Esophagus muscularis mucosa (tissue), 4 donors: ENCODE measurements at regions of chr4 and their contacts with region 1.

Region 1: GRCh38 chr4:14853176-14853943 is 148.9 kb upstream of the CPEB2 start:
- DNase-seq: no peak
- H3K4me3 ChIP-seq: no peak overlapping the region
- H3K27ac ChIP-seq: peak overlapping the region; percentile 39 to 61 (median 50)
- H3K4me1 ChIP-seq: peaks cover 0 to 34% (median 30%) of the 10 kb centered on the region in 4 donors
- H3K27me3 ChIP-seq: no peaks in the 10 kb centered on the region
- CTCF ChIP-seq: no peak
- EP300 ChIP-seq: no peak
- POLR2A ChIP-seq: no peak

Region 2: DNA sequence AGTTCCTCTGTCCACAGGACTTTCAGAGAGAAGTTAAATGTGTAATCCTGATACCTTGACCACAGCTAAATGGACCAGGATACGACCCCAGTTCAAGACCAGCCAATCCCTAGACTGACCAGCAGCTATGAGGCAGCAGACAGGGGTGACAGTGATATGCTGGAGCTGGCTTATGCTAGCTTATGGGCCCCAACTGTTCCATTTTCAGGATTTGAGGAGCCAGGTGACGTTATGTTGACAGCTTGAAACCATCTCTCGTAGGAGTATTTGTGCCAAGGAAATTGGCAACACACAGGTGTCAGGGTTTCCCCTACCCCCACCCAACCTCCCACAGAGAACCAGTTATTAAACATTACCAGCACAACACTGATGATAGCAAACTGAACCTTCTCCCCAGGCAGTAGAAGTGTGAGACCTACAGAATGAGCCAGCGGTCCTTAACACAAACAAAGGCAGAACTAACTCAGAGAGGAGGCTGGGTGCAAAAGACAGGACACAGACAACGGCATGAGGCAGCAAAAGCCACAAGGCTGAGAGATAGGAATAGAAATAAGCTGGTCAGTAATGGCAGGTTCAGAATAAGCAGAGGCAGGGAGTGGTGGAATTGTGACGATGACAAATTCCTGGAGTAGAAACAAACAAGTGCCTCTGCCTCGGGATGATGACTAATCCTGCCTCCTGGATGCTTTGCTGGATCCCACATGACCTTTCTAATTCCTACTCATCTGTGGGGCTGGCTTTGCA is 63.4 kb after region 1 on chr4:
- intact Hi-C with region 1: loop called (anchors 5 kb)
- DNase-seq: no peak
- H3K4me3 ChIP-seq: no peak overlapping the region
- H3K27ac ChIP-seq: peak overlapping the region; percentile 56 to 64 (median 60)
- H3K4me1 ChIP-seq: peaks cover 10 to 26% (median 24%) of the 10 kb centered on the region in 4 donors
- H3K27me3 ChIP-seq: no peaks in the 10 kb centered on the region
- CTCF ChIP-seq: no peak
- EP300 ChIP-seq: no peak
- POLR2A ChIP-seq: no peak

Region 3: GRCh38 chr4:15385928-15386327 is 532.6 kb after region 1 on chr4:
- intact Hi-C with region 1: no loop called
- DNase-seq: no peak
- H3K4me3 ChIP-seq: no peak overlapping the region
- H3K27ac ChIP-seq: peak overlapping the region; percentile 38 to 48 (median 43)
- H3K4me1 ChIP-seq: peaks cover 3 to 23% (median 20%) of the 10 kb centered on the region in 4 donors
- H3K27me3 ChIP-seq: no peaks in the 10 kb centered on the region
- CTCF ChIP-seq: no peak
- EP300 ChIP-seq: no peak
- POLR2A ChIP-seq: no peak

Region 4: GRCh38 chr4:15794905-15795304 is 941.5 kb after region 1 on chr4:
- intact Hi-C with region 1: no loop called
- DNase-seq: no peak
- H3K4me3 ChIP-seq: no peak overlapping the region
- H3K27ac ChIP-seq: no peak overlapping the region
- H3K4me1 ChIP-seq: no peaks in the 10 kb centered on the region
- H3K27me3 ChIP-seq: no peaks in the 10 kb centered on the region
- CTCF ChIP-seq: no peak
- EP300 ChIP-seq: no peak
- POLR2A ChIP-seq: no peak